Body of pancreas (tissue), 4 donors: ENCODE measurements at regions of chr7 and their contacts with region 1.

Region 1: GRCh38 chr7:21253740-21254687 is 173.9 kb upstream of the SP4 start:
- DNase-seq: peak; percentile 58 to 79 (median 68)
- ATAC-seq: peak; percentile 48
- H3K4me3 ChIP-seq: no peak overlapping the region
- H3K27ac ChIP-seq: no peak overlapping the region
- H3K4me1 ChIP-seq: no peaks in the 10 kb centered on the region
- H3K27me3 ChIP-seq: peaks cover 0 to 20% of the 10 kb centered on the region in 2 donors
- CTCF ChIP-seq: peak; percentile 30 to 63 (median 53)
- POLR2A ChIP-seq: no peak

Region 2: GRCh38 chr7:20778063-20778721 is 475.8 kb before region 1 on chr7:
- intact Hi-C with region 1: loop called (anchors 5 kb)
- DNase-seq: peak in 3 of 4 donors; percentile 39 to 59 (median 46)
- ATAC-seq: peak; percentile 85
- H3K4me3 ChIP-seq: no peak overlapping the region
- H3K27ac ChIP-seq: no peak overlapping the region
- H3K4me1 ChIP-seq: peaks cover 13% of the 10 kb centered on the region
- H3K27me3 ChIP-seq: peaks cover 0 to 54% of the 10 kb centered on the region in 2 donors
- CTCF ChIP-seq: peak; percentile 44 to 85 (median 55)
- POLR2A ChIP-seq: no peak

Region 3: DNA sequence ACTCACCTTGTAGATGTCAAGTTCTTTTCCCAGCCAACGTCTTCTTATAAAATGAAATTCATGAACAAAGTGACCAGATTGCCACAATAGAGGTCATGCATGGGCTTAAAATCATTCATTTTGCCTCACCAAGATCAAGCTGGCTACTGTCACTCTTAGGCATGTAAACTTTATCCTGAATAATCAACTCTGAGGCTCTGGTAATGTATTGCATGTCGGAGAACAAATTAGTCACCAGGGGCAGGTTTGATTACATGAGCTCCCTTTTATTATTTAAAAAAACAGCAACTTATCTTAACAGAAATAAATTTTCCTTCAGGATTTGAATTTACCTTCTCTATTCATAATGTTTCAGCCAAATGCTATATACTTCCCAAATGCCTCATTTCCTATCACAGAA is 60.9 kb after region 1 on chr7:
- intact Hi-C with region 1: no loop called
- DNase-seq: no peak
- ATAC-seq: no peak
- H3K4me3 ChIP-seq: no peak overlapping the region
- H3K27ac ChIP-seq: no peak overlapping the region
- H3K4me1 ChIP-seq: no peaks in the 10 kb centered on the region
- H3K27me3 ChIP-seq: no peaks in the 10 kb centered on the region
- CTCF ChIP-seq: no peak
- POLR2A ChIP-seq: no peak